PC-9 (cell line): ENCODE measurements at regions of chr18 and their contacts with region 1.

Region 1: GRCh38 chr18:9683407-9684396 is 24.4 kb upstream of the RAB31 start:
- DNase-seq: peak; percentile 75 to 76
- H3K4me3 ChIP-seq: peak overlapping the region; percentile 15; the same call in 1 of the 2 replicates
- H3K27ac ChIP-seq: peak overlapping the region; percentile 56
- H3K4me1 ChIP-seq: peaks cover 32% of the 10 kb centered on the region
- H3K27me3 ChIP-seq: no peaks in the 10 kb centered on the region
- CTCF ChIP-seq: peak; percentile 62

Region 2: GRCh38 chr18:8654503-8655451 is 1028.9 kb before region 1 on chr18:
- CTCF ChIA-PET with region 1: no interaction called
- POLR2A ChIA-PET with region 1: no interaction called
- intact Hi-C with region 1: loop called (anchors 10 kb)
- DNase-seq: no peak
- H3K4me3 ChIP-seq: no peak overlapping the region
- H3K27ac ChIP-seq: no peak overlapping the region
- H3K4me1 ChIP-seq: no peaks in the 10 kb centered on the region; the same call in 1 of the 2 replicates
- H3K27me3 ChIP-seq: no peaks in the 10 kb centered on the region
- CTCF ChIP-seq: peak; percentile 85

Region 3: GRCh38 chr18:9631814-9632496 is 51.7 kb before region 1 on chr18:
- CTCF ChIA-PET with region 1: no interaction called
- POLR2A ChIA-PET with region 1: no interaction called
- intact Hi-C with region 1: no loop called
- DNase-seq: peak in 1 of 2 experiments; percentile 88
- H3K4me3 ChIP-seq: no peak overlapping the region; the same call in 1 of the 2 replicates
- H3K27ac ChIP-seq: peak overlapping the region; percentile 65
- H3K4me1 ChIP-seq: peaks cover 37% of the 10 kb centered on the region
- H3K27me3 ChIP-seq: no peaks in the 10 kb centered on the region
- CTCF ChIP-seq: no peak

Region 4: DNA sequence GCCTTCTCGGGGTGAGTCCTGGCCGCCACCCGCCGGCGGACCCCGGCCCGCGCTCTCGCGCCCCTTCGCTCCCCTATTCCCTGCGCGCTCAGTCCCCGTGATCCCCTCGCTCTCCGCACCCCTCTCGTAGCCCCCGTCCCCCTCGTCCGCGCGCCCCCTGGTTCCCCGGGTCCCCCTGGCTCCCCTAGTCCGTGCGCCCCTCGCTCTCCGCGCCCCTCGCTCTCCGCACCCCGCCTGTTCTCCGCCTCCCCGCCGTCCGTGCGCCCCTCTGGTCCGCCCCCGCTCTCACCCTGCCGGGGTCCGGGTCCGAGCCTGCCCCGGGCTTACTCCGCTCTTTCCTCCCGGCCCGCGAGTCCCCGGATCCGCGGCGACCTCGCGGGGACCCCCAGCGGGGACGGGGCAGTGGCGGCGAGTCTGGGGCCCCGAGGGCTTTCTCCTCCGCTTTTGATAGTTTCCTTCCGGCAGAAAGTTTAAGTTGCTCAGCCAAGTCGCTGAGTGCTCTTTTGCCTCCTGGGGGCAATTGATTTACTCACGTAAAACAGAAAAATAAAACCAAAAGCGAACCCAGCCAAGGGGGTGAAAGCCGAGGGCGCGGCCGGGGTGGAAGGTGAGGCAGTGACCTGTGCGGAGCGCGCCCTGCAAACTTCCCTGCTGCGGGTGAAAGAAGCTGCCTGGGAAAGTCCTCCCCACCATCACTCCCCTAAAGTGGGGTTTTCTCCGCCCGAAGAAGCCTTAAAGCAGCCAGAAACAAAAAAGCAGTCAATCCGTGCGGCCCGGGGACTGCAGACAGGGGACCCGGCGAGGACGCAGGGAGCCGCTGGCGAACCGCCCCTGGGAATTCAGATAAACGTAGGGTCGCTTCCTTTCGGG is 25.0 kb after region 1 on chr18:
- CTCF ChIA-PET with region 1: no interaction called
- POLR2A ChIA-PET with region 1: no interaction called
- intact Hi-C with region 1: no loop called
- DNase-seq: no peak
- H3K4me3 ChIP-seq: peak overlapping the region; percentile 83
- H3K27ac ChIP-seq: peak overlapping the region; percentile 2; the same call in 1 of the 2 replicates
- H3K4me1 ChIP-seq: peaks cover 43% of the 10 kb centered on the region
- H3K27me3 ChIP-seq: no peaks in the 10 kb centered on the region
- CTCF ChIP-seq: no peak

Region 5: GRCh38 chr18:9719421-9719981 is 35.8 kb after region 1 on chr18:
- CTCF ChIA-PET with region 1: interaction called, 6 read pairs
- POLR2A ChIA-PET with region 1: no interaction called
- intact Hi-C with region 1: loop called (anchors 1 kb)
- DNase-seq: peak; percentile 78 to 82
- H3K4me3 ChIP-seq: peak overlapping the region; percentile 24; the same call in 1 of the 2 replicates
- H3K27ac ChIP-seq: peak overlapping the region; percentile 76
- H3K4me1 ChIP-seq: peaks cover 39% of the 10 kb centered on the region
- H3K27me3 ChIP-seq: no peaks in the 10 kb centered on the region
- CTCF ChIP-seq: no peak

Region 6: GRCh38 chr18:9849407-9850281 is 165.9 kb after region 1 on chr18:
- CTCF ChIA-PET with region 1: no interaction called
- POLR2A ChIA-PET with region 1: no interaction called
- intact Hi-C with region 1: loop called (anchors 2 kb)
- DNase-seq: peak; percentile 92 to 98
- H3K4me3 ChIP-seq: peak overlapping the region; percentile 44; the same call in 1 of the 2 replicates
- H3K27ac ChIP-seq: peak overlapping the region; percentile 96
- H3K4me1 ChIP-seq: peaks cover 51% of the 10 kb centered on the region
- H3K27me3 ChIP-seq: no peaks in the 10 kb centered on the region
- CTCF ChIP-seq: no peak

Region 7: GRCh38 chr18:10006311-10006893 is 322.7 kb after region 1 on chr18:
- CTCF ChIA-PET with region 1: no interaction called
- POLR2A ChIA-PET with region 1: no interaction called
- intact Hi-C with region 1: no loop called
- DNase-seq: no peak
- H3K4me3 ChIP-seq: no peak overlapping the region
- H3K27ac ChIP-seq: no peak overlapping the region
- H3K4me1 ChIP-seq: no peaks in the 10 kb centered on the region
- H3K27me3 ChIP-seq: no peaks in the 10 kb centered on the region
- CTCF ChIP-seq: peak; percentile 45; the same call in 1 of the 2 replicates

Region 8: DNA sequence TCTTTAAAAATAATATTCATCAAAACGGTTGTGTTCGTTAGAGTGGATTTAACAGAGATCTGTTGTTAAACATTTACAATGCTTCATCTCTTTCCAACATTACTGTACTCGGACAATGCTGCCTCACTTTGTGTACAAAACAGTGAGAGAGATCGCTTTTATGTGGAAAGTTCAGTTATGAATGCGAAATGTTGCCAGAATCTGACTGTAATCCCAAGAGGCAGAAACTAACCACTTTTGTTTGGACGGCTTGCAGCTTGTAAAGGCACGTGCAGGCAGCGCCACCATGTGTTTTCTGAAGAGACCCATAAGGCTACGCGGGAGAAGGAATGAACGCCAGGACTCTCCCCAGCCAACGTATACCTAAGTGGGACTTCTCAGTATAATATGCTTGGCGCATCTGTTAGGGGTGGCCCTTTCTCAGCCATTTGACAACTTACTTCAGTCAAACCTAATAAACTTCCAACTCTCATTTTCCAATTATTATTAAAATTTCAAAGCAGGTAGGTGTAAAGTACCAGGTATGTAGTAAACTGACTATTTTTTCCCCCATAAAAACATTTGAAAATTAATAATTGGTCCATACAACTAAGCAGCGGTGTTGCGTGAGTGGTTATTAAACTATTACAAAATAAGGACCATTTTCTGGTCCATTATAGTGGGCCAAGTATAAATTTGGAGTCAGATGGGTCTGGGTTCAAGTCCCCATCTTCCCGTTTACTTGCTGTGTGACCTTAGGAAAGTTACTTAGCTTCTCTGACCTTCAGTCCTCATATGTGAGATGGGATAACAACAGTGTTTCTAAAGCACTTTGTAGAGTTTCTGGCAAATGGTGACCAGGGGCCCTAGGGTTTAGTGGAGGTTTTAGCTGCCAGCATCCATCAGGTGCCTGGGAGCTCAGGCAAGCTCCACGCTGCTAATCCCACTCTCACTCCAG is 836.6 kb after region 1 on chr18:
- CTCF ChIA-PET with region 1: interaction called, 3 read pairs
- POLR2A ChIA-PET with region 1: no interaction called
- intact Hi-C with region 1: loop called (anchors 1 kb)
- DNase-seq: peak; percentile 54 to 70
- H3K4me3 ChIP-seq: no peak overlapping the region
- H3K27ac ChIP-seq: no peak overlapping the region
- H3K4me1 ChIP-seq: peaks cover 7% of the 10 kb centered on the region
- H3K27me3 ChIP-seq: 0 out of 2 replicates have a peak, but pooled peaks cover 3% of the 10 kb centered on the region
- CTCF ChIP-seq: peak; percentile 74